ENCODE measurements at regions of chr6 and their contacts with region 1.

Region 1: DNA sequence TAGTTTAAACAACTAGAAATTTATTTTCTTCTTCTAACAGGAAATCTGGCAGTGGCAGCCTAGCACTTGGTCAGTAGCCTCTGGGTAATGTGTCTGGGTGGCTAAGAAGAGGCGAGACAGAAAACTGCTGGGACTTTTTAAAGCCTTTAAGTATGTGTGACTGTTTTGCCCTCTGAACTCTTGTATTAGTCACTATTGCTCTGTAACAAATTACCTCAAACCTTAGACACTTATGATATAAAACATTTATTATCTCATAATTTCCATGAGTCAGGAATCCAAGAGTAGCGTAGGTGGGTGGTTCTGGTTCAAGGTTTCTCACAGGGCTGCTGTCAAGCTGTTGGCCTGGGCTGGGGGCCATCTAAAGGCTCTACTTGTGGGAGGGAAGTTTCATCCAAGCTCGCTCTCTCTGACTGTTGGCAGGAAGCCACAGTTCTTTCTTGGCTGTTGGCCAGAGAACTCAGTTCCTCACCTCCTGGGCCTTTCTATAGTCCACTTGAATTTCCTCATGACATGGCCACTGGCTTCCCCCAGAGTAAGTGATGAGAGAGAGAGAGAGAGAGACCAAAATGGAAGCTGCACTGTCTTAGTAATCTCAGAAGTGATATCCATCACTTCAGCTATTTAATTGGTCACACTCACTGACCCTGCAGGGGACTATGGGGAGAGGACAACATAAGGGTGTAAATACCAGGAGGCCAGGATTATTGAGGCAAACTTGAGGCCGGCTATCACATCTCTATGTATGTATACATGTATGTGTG is 17.4 kb upstream of the TBC1D22B start:
- DNase-seq: peak; percentile 94
- ATAC-seq: peak; percentile 93
- H3K4me3 Mint-ChIP-seq: no peak overlapping the region
- H3K27ac Mint-ChIP-seq: peak overlapping the region; percentile 73
- H3K4me1 Mint-ChIP-seq: peaks cover 41% of the 10 kb centered on the region
- H3K27me3 Mint-ChIP-seq: no peaks in the 10 kb centered on the region
- CTCF ChIP-seq: no peak

Region 2: DNA sequence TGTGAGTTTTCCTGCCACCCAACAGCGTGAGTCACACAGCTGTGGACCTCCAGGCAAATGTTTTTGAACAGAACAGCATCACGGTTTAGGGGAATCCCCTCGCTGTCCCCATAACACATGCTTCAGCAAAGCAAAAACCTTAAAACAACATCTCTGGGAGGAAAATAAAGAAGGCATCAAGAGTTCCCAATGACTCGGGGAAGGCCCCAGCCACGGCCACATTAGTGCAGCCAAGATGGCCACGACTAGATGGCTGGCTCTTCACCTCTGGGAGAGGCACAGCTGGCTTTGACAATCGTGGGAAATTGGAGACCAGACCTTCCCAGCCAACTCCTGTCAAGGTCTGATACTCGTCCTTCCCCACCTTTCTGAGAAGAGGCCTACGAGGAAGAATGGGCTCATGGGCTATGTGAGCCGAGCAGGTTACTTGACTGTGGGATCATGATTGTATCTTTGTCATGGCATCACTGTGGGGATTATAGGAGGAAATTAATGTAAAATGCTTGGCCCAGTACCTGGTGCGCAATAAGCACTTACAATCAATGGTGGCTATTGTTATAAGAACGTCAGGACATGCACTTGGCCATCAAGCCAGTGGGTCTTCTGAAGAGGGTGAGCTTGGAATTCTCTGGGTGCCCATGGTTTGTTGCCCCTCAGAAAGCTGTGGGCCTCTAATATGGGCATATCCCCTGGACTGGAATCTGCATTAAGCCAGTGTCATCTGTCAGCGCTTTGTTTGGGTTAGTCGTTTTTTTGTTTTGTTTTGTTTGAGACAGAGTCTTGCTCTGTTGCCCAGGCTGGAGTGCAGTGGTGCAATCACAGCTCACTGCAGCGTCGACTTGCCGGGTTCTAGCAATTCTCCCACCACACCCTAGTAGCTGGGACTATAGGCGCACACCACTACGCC is 191.0 kb before region 1 on chr6:
- CTCF ChIA-PET with region 1: no interaction called
- POLR2A ChIA-PET with region 1: no interaction called
- intact Hi-C with region 1: no loop called
- DNase-seq: peak; percentile 90
- ATAC-seq: peak; percentile 60
- H3K4me3 Mint-ChIP-seq: peak overlapping the region; percentile 83
- H3K27ac Mint-ChIP-seq: peak overlapping the region; percentile 99
- H3K4me1 Mint-ChIP-seq: peaks cover 65% of the 10 kb centered on the region
- H3K27me3 Mint-ChIP-seq: no peaks in the 10 kb centered on the region
- CTCF ChIP-seq: no peak

Region 3: GRCh38 chr6:37257634-37258404 is 17.7 kb after region 1 on chr6 and contains the starts of genes TBC1D22B and TMEM217:
- CTCF ChIA-PET with region 1: interaction called, 5 read pairs
- POLR2A ChIA-PET with region 1: interaction called, 13 read pairs
- intact Hi-C with region 1: no loop called
- DNase-seq: peak; percentile 97
- ATAC-seq: peak; percentile 99
- H3K4me3 Mint-ChIP-seq: peak within 1 kb of the TSS; percentile 82
- H3K27ac Mint-ChIP-seq: peak within 1 kb of the TSS; percentile 93
- H3K4me1 Mint-ChIP-seq: peaks cover 39% of the 10 kb centered on the region
- H3K27me3 Mint-ChIP-seq: no peaks in the 10 kb centered on the region
- CTCF ChIP-seq: no peak
- total RNA-seq, gene TBC1D22B: 12.1 to 12.3 TPM
- total RNA-seq, gene TMEM217: 4.0 to 5.7 TPM

Measured in activated CD8-positive, alpha-beta T cell treated with anti-CD3 and anti-CD28 coated beads for 36 hours (primary cell).